Activated naive CD4-positive, alpha-beta T cell treated with anti-CD3 and anti-CD28 coated beads, Interleukin-2, amount 10 ng/mL, durations not matched to agents 7 days and 5 days (primary cell): ENCODE measurements at regions of chr20 and their contacts with region 1.

Region 1: GRCh38 chr20:53915446-53916172 is 154.8 kb downstream of the BCAS1 start:
- DNase-seq: peak; percentile 98
- H3K4me3 Mint-ChIP-seq: peak overlapping the region; percentile 82
- H3K27ac Mint-ChIP-seq: peak overlapping the region; percentile 88
- H3K4me1 Mint-ChIP-seq: peaks cover 38% of the 10 kb centered on the region
- H3K27me3 Mint-ChIP-seq: no peaks in the 10 kb centered on the region

Region 2: DNA sequence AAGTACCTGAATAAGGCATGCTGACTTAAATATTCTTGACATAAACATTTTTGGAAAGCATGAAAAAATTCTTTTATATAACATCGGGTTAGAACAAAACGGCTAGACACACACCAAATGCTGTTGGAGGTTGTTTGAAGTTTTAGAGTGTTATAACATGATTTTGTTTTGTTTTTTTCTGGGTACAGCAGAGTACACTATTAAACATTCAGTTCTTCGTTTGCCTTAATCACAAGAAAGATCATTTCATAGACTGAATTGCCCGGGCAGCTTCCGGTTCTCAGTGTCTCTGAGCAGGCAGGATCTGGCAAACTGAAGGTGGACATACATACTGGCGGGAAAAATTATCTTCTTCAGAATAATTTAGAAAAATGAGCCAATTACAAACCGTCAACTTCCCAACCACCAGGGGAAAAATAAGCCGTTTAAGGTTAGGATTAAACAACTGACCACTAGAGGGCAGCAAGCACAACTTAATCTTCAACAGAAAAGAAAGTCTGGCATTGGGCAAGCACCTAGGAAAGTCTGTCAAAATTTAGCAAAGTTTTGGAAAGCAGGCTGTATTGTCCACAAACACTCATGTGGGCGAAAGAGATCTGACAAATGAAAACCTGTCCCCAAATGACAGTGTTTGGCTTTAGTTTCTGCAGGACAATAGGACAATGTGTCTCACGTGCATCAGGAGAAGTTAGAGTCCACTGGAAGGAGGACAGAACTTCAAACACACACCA is 337.0 kb before region 1 on chr20:
- CTCF ChIA-PET with region 1: interaction called, 29 read pairs
- DNase-seq: peak; percentile 59
- H3K4me3 Mint-ChIP-seq: peak overlapping the region; percentile 76
- H3K27ac Mint-ChIP-seq: peak overlapping the region; percentile 95
- H3K4me1 Mint-ChIP-seq: peaks cover 94% of the 10 kb centered on the region
- H3K27me3 Mint-ChIP-seq: no peaks in the 10 kb centered on the region

Region 3: DNA sequence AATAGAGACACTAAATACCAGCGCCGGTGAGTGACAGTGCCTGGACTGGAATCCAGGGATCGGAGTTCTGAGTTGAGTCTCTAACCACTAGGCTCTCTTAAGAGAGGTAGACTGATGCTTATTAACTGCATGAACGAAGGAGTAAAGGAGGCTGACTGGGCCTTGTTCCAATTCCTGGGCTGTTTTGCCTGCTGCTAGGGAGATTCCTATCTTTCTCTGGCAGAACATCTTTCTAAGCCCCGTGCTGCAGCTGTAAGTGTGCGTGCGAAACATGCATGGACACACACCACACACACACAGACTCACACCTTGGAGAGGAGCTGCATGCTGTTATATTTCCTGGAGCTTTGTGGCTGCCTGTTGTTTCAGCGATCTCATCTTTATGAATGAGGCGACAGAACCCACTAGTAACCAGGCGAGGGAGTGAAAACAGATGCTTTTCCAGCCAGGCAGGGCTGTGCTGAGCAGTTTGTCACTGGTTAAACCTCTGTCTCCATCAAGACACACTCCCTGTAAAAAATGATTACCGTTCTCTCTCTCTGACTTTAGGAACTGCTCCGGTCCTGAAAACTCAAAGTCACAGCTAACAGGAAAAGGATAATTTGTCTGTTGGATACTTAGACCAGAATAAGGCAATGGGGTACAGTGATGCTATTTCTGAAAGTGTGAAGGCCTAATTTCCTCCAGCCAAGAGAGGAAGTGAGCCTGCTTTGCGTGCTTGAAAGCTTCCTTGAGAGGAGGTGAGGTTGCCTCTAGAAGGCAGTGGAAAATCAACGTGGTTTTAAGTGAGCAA is 164.6 kb before region 1 on chr20:
- CTCF ChIA-PET with region 1: interaction called, 29 read pairs
- DNase-seq: peak; percentile 64
- H3K4me3 Mint-ChIP-seq: peak overlapping the region; percentile 27
- H3K27ac Mint-ChIP-seq: peak overlapping the region; percentile 99
- H3K4me1 Mint-ChIP-seq: peaks cover 80% of the 10 kb centered on the region
- H3K27me3 Mint-ChIP-seq: no peaks in the 10 kb centered on the region

Region 4: DNA sequence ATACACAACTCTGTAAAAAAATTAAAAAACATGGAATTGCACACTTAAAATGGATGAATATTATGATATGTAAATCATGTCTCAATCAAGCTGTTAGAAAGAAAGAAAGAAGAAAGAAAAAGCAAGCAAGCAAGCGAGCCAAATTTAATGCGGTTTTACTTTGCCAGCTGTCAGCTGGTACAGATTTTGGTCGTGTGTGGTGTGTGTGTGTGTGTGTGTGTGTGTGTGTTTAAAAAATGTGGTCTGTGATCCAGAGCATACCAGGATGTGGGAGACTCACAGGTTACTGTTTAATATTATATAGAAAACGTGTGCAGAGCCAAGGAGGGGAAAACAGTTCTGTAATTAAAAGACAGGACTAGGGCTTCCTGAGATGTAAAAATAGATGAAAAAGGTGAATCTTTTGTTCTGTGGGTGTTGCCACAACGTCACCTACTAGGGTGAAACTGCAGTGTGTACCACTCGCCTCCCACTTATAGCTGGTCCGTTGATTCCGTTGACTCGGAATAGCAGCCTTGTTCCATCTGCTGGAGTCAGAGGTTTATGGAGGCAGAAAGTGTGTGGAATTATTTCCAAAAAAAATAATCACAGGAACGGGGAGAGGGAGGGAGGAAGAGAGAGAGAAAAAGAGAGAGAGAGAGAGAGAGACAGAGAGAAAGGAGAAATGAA is 42.9 kb before region 1 on chr20:
- CTCF ChIA-PET with region 1: interaction called, 19 read pairs
- DNase-seq: peak; percentile 72
- H3K4me3 Mint-ChIP-seq: peak overlapping the region; percentile 76
- H3K27ac Mint-ChIP-seq: peak overlapping the region; percentile 98
- H3K4me1 Mint-ChIP-seq: peaks cover 63% of the 10 kb centered on the region
- H3K27me3 Mint-ChIP-seq: peaks cover 11% of the 10 kb centered on the region

Region 5: DNA sequence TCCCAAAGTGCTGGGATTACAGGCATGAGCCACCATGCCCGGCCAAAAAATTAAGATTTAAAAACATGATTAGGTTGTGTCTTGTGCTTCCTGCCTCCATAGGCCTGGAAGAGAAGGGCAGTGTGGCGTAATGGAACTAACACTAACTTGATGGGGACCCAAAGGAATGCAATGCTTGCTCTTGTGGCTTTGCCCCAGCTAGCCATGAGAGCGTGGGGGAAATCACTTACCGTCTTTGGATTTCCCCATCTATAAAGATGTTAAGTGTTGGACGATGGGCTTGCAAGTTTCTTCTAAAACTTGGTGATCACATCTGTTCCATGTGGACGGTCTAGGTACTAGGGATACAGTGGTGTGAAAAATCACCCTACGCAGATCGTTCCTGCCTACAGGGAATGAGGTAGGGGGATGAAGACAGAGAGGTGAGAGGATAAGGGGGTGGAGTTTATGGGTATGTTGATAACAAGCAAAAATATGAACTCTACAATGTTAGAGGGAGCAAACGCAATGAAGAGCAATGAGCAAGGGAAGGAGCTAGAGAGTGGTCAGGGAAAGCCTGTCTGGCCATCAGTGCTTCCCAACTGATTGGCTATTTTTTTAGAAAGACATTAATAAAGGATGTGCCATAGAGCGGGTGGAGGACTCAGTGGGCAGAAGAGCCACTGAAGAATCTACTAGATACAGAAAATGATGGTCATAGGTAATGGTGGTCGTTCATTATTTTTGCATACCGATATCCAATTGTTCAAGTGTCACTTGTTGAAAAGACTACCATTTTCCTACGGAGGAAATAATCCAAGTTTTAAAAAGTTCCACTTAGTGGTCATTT is 10.4 kb before region 1 on chr20:
- CTCF ChIA-PET with region 1: interaction called, 14 read pairs
- DNase-seq: no peak
- H3K4me3 Mint-ChIP-seq: no peak overlapping the region
- H3K27ac Mint-ChIP-seq: no peak overlapping the region
- H3K4me1 Mint-ChIP-seq: peaks cover 47% of the 10 kb centered on the region
- H3K27me3 Mint-ChIP-seq: no peaks in the 10 kb centered on the region